ENCODE measurements at regions of chr2 and their contacts with region 1.

Region 1: DNA sequence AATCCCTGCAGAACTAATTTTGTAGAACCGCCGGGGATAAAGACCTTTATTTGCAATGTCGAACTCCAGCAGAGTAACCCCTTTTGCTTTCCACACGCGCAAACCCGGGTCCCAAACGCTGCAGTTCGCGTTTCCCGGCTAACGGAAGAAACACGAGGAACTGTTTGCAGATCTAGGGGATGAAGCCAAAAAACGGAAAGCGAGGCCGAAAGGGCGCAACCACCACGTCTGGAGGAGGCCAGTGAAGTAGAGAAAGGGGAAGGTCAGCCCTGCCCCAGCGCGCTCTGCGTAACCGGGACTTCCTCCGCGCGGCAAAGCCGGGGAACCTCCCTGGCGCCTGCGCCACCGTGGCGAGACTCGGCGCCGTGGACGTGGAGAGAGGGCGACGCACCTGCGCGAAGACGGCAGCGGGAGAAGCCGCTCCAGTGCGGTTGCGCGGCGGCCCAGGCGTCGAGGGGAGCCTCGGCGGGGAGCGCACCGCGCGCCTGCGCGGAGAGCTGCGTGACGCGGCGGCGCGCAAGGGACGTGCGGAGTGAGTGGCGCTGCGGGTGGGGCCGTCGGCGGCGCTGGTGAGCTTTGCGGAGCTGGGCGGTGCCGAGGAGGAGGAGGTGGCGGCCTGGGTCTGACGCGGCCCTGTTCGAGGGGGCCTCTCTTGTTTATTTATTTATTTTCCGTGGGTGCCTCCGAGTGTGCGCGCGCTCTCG is at the start of gene PPP1CB:
- DNase-seq: peak in 1 of 2 donors; percentile 96
- H3K4me3 ChIP-seq: peak within 1 kb of the TSS; percentile 71 to 91
- H3K27ac ChIP-seq: peak within 1 kb of the TSS; percentile 99
- H3K4me1 ChIP-seq: peaks cover 56% of the 10 kb centered on the region
- H3K27me3 ChIP-seq: no peaks in the 10 kb centered on the region
- CTCF ChIP-seq: peak in 1 of 3 experiments; percentile 13
- POLR2A ChIP-seq: peak in 1 of 2 donors; percentile 78
- total RNA-seq, gene PPP1CB: 236 TPM

Region 2: GRCh38 chr2:28566521-28567041 is 184.8 kb before region 1 on chr2:
- intact Hi-C with region 1: loop called (anchors 5 kb)
- DNase-seq: no peak
- H3K4me3 ChIP-seq: peak overlapping the region; percentile 57 to 59
- H3K27ac ChIP-seq: peak overlapping the region; percentile 79
- H3K4me1 ChIP-seq: peaks cover 19% of the 10 kb centered on the region
- H3K27me3 ChIP-seq: no peaks in the 10 kb centered on the region
- CTCF ChIP-seq: peak; percentile 96 to 99 (median 99)
- POLR2A ChIP-seq: no peak

Region 3: GRCh38 chr2:28594289-28595108 is 156.9 kb before region 1 on chr2:
- intact Hi-C with region 1: loop called (anchors 2 kb)
- DNase-seq: no peak
- H3K4me3 ChIP-seq: no peak overlapping the region
- H3K27ac ChIP-seq: peak overlapping the region; percentile 71
- H3K4me1 ChIP-seq: no peaks in the 10 kb centered on the region
- H3K27me3 ChIP-seq: no peaks in the 10 kb centered on the region
- CTCF ChIP-seq: peak; percentile 66 to 94 (median 68)
- POLR2A ChIP-seq: no peak

Region 4: DNA sequence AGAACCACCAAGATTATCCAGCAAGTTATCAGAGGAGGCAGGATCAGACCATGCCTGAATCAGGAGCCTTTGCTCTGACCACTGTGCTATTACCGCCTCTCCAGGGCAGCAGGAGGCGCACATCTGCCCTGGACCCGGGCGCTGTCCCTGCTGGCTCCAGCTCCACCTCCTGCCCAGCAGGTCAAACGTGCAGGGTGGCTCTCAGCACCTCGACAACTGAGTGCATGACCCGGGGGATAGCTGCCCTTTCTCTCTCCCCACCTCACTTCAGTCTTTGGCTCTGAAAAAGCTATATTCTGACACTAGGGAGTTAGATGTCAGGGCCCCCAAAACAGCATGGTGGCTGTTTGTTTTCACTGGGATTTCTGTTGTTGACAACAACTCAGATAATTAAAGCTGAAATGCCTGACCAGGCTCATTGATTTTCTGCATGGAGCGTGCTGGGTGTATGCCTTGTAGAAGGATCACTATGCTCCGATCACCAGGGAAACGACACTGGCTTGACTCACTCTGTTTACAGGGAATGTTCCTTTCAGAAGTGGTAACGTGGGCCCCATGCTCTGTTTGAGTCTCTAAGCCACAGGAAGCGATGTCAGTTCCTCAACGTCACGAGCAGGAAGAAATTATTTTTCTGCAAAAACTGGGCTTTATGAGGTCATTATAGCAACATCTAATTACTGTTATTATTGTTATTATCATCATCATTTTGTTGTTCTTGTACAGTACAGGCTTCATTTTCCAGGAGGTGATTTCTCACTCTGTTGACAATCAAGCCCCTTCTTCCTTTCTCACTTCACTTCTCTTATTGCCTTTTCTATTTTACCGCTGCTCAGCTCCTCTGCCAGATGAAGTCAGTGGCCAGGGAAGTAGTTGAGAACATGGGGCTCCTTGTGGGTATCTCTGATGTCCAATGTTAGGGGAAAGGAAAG is 130.0 kb before region 1 on chr2:
- intact Hi-C with region 1: loop called (anchors 10 kb)
- DNase-seq: no peak
- H3K4me3 ChIP-seq: no peak overlapping the region
- H3K27ac ChIP-seq: peak overlapping the region; percentile 90
- H3K4me1 ChIP-seq: peaks cover 52% of the 10 kb centered on the region
- H3K27me3 ChIP-seq: no peaks in the 10 kb centered on the region
- CTCF ChIP-seq: no peak
- POLR2A ChIP-seq: peak in 1 of 2 donors; percentile 20

Region 5: GRCh38 chr2:28661589-28662001 is 89.8 kb before region 1 on chr2:
- intact Hi-C with region 1: loop called (anchors 2 kb)
- DNase-seq: peak in 1 of 2 donors; percentile 95
- H3K4me3 ChIP-seq: no peak overlapping the region
- H3K27ac ChIP-seq: peak overlapping the region; percentile 86
- H3K4me1 ChIP-seq: peaks cover 71% of the 10 kb centered on the region
- H3K27me3 ChIP-seq: no peaks in the 10 kb centered on the region
- CTCF ChIP-seq: no peak
- POLR2A ChIP-seq: no peak

Region 6: DNA sequence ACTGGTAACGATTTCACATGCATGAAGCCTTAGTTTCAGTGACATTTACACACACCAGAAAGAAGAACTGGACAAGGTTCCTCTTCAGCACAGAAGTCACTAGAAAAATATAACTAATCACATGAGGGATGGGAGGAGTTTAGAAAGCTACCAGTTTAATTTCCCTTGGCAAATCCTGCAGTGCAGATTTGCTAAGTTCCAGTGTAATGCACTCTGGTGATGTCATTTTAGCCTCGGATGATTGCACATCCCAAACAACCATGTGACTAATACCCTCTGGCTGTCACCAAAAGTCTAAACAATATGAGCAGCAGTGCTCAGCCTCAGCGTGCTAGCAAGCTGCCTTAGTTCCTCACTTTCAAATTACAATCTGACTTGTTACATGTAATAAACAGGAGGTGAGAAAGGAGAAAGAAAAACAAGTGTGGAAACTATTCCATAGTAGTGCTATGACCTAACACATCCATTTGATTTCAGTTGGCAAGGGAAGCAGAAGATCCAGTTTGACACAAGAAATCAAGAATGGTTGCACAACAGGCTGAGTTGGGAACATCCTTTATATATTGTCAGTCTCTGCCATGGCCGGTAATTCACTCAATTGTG is 35.0 kb before region 1 on chr2:
- intact Hi-C with region 1: loop called (anchors 5 kb)
- DNase-seq: peak in 1 of 2 donors; percentile 94
- H3K4me3 ChIP-seq: no peak overlapping the region
- H3K27ac ChIP-seq: peak overlapping the region; percentile 69
- H3K4me1 ChIP-seq: peaks cover 22% of the 10 kb centered on the region
- H3K27me3 ChIP-seq: no peaks in the 10 kb centered on the region
- CTCF ChIP-seq: no peak
- POLR2A ChIP-seq: no peak